Stomach (tissue), 19 donors: ENCODE measurements at regions of chr1 and their contacts with region 1.

Region 1: DNA sequence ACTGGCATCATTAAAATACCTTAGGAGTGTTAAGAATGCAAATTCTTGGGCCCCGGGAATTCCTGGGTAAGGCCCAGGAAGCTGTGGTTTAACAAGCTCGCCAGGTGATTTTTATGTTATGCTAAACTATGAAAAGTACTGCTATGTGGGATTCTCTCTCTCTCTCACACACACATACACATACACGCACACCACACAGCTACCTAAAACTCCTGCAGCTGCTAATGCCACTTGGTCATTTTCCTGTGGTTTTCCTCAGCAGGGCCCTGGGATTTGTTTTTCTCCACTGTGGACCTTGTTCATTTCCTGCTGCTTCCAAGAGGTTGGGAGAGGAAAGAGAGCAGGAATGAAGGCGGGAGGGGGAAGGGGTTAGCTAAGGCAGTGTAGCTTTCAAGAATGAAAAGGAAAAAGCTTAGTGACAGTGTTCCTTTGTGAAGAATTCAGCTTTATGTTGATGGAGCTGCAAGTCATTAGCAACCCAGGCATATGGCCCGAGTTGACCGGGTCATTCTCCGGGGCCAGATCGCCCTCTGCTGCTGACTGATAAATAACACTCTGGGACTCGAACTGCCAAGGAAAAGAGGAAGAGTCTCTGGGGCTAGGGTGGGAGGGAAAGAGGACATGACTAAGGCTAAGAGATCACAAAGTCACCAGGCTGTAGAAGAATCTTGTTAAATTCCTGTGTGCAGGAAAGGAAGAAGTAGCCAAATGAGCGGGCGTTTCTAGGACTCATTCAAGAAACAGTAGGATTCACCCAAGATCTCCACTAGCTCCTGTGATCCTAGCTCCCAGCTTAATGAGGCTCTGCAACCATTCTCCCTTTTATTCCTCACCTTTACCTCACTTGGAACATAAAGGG is 30.5 kb upstream of the LRIG2 start:
- DNase-seq: peak; percentile 77 to 90
- H3K4me3 ChIP-seq: no peak overlapping the region
- H3K27ac ChIP-seq: no peak overlapping the region
- H3K4me1 ChIP-seq: peaks cover 7 to 24% (median 14%) of the 10 kb centered on the region in 4 donors
- H3K27me3 ChIP-seq: no peaks in the 10 kb centered on the region
- CTCF ChIP-seq: peak in 5 of 7 experiments; percentile 35 to 78 (median 57)
- EP300 ChIP-seq: no peak
- POLR2A ChIP-seq: no peak

Region 2: DNA sequence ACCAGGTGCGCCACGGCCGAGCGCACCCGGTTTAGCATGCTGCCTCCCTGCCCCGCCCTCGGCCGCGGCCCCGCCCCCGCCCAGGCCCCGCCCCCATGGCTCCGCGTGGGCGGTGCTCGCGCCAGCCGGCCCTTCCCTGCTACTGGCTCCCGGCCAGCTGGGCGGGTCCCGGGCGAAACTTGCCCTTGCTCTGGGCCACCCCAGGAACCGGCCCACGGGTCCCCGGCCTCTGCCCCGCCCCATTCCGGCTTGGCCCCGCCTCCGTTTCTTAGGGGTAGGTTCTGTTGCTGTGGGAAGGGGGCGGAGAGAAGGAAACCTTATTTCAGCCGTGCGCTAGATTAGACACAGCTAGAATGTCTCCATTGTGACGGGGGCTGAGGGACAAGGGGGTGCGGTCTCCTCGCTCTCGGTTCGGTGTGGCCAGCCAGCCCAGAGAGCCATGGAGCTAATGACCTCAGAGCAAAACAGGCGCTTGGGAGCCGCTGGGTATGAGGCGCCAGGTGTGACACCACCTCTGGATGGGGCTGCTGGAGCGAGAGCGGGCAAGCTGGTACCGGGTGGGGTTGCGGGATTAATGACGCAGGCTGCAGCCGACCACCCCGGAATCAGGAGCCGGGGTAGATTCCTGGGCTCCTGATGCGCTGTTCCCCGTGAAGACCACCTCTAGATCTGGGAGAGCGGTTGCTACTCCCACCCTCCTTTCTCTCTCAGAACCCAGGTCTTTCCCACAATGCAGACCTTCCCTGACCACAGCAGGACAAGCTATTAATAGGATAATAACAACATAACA is 327.1 kb before region 1 on chr1 and contains the start of gene PPM1J:
- intact Hi-C with region 1: loop called (anchors 10 kb)
- DNase-seq: peak; percentile 98 to 100
- H3K4me3 ChIP-seq: peak within 1 kb of the TSS; percentile 67 to 86 (median 70)
- H3K27ac ChIP-seq: peak within 1 kb of the TSS; percentile 58 to 81 (median 76)
- H3K4me1 ChIP-seq: peaks cover 22 to 43% (median 39%) of the 10 kb centered on the region in 4 donors
- H3K27me3 ChIP-seq: peaks cover 0 to 23% (median 0%) of the 10 kb centered on the region in 3 donors
- CTCF ChIP-seq: no peak
- EP300 ChIP-seq: no peak
- POLR2A ChIP-seq: no peak
- total RNA-seq, gene PPM1J: 0.87 to 1.3 TPM in 2 of 5 donors, not detected in the others

Region 3: DNA sequence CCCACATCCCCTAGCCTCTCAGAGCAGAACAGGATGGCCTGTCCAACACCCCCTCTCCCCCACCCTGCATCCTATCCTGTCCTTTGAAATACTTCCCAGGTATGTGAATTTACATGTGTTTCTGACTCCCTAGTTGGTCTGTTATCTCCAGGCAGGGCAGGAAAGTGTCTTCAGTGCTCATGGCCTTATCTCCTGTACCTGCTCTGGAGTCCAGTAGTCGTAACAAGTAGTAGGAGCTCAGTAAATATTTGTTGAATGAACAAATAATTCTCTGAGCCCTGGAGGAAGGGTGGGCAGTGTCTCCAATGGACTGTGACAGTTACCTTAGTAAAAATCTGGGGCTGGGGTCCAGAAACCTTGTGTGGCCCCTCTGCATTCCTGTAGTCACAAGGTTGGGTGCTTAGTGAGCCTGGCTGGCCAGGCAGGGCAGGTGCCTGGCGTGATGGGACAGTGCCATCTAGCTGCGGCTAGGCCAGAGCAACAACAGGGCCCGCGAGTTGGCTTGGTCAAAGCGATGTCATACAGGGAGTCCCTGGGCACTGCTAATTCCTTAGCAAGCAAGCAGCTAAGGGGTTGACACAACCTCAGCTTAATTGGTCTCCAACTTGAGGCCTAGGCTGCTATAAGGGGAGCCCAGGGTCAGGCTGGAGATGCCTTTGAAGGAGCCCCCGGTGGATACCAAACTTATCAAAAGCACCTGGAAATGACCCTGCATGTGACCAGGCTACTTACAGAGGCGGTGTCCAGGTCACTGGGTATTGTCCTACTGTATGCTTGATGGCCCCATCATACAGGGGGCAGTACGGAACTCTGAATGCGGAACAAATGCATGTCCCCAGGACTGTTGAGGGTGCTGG is 238.4 kb before region 1 on chr1:
- intact Hi-C with region 1: loop called (anchors 10 kb)
- DNase-seq: peak; percentile 80 to 91
- H3K4me3 ChIP-seq: no peak overlapping the region
- H3K27ac ChIP-seq: no peak overlapping the region
- H3K4me1 ChIP-seq: peaks cover 0 to 2% (median 0%) of the 10 kb centered on the region in 4 donors
- H3K27me3 ChIP-seq: peaks cover 0 to 6% (median 0%) of the 10 kb centered on the region in 3 donors
- CTCF ChIP-seq: peak in 5 of 7 experiments; percentile 22 to 70 (median 60)
- EP300 ChIP-seq: no peak
- POLR2A ChIP-seq: no peak

Region 4: DNA sequence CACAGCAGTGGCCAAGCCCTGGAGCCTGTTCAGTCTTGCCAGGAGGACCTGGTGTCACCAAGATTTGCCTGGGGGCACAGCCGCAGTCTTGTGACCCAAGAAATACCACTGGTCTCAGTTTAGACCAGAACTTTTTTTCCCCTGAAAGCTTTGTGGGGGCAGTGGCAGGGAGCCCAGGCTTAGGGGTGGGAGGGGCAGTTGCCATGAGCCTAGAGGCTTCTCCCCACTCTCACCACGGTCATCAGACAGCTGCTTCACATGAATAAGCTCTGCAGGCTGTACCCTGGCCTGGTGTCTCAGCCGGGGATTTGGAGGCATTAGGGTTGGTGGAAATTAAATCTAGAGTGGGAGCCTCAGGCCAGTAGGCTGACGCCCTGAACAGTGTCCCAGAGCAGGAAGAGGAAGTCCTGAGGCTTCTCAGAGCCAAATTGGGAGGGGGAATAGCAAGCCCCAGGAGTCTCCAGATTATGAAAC is 160.2 kb before region 1 on chr1:
- intact Hi-C with region 1: loop called (anchors 5 kb)
- DNase-seq: peak in 1 of 2 donors; percentile 29
- H3K4me3 ChIP-seq: no peak overlapping the region
- H3K27ac ChIP-seq: peak overlapping the region; percentile 61 to 79 (median 69)
- H3K4me1 ChIP-seq: peaks cover 8 to 18% (median 11%) of the 10 kb centered on the region in 4 donors
- H3K27me3 ChIP-seq: no peaks in the 10 kb centered on the region
- CTCF ChIP-seq: no peak
- EP300 ChIP-seq: no peak
- POLR2A ChIP-seq: no peak